ENCODE measurements at regions of chr11 and their contacts with region 1.

Region 1: DNA sequence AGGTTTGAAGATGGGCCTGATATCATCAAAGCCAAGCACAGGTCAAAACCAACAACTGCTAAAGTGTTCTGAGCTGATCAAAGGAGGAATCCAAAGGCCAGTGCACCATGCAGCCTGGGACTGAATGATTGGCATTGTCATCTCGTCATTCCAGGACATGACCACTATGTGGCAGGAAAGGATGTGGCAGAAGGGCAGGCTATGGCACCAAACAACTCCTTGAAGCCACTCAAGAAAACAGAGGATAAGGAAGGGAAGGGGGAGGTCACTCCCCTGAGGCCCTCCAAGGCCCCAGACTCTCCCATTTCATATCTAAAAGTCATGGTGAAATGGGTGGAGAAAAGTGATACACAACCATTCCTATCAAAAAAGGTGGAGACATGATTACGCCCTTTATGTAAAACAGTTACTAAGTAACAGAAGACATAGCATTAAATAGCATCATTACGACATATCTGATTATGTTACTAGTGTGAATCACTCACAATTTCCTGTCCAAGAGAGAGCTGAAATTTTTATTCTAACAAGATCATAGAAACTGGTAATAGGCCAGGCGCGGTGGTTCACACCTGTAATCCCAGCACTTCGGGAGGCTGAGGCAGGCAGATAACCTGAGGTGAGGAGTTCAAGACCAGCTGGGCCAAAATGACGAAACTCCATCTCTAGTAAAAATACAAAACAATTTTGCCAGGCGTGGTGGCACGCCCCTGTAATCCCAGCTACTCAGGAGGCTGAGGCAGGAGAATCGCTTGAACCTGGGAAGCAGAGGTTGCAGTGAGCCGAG is 49.3 kb downstream of the AHNAK start:
- DNase-seq: peak; percentile 76 to 98
- H3K4me3 ChIP-seq: no peak overlapping the region
- H3K27ac ChIP-seq: peak overlapping the region; percentile 73
- H3K4me1 ChIP-seq: peaks cover 28% of the 10 kb centered on the region
- H3K27me3 ChIP-seq: no peaks in the 10 kb centered on the region
- CTCF ChIP-seq: peak; percentile 74

Region 2: DNA sequence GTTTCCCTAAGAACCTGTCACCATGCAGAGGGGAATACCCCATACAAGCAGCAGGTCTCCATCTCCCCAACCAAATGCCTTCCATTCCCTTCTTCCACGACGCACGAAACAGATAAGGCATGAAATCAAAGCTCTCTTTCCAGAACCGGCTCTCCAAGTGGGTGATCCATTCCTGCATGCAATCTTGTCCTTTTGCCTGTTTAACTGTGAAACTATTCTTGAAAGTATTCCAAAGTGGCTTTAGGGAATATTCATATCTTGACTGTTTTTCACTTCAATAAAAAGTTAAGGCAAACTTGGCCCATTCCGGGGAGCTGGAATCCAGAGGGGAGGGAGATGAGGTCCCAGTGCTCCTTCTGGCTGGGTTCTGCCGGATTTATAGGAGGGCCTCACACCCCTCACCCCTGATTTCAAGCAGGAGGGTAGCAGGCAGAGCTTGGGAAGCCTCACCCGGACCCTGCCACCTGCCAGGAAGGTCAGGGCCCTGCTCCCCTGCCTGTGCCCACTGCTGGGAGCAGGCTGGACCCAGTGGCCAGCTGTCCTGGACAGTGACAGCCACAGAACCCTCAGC is 17.6 kb before region 1 on chr11:
- CTCF ChIA-PET with region 1: interaction called, 10 read pairs
- POLR2A ChIA-PET with region 1: interaction called, 47 read pairs
- intact Hi-C with region 1: loop called (anchors 1 kb)
- DNase-seq: no peak
- H3K4me3 ChIP-seq: peak overlapping the region; percentile 36; the same call in 1 of the 2 replicates
- H3K27ac ChIP-seq: peak overlapping the region; percentile 95
- H3K4me1 ChIP-seq: peaks cover 42% of the 10 kb centered on the region
- H3K27me3 ChIP-seq: no peaks in the 10 kb centered on the region
- CTCF ChIP-seq: no peak

Region 3: GRCh38 chr11:62566247-62566646 is 68.9 kb after region 1 on chr11:
- CTCF ChIA-PET with region 1: interaction called, 13 read pairs
- POLR2A ChIA-PET with region 1: no interaction called
- intact Hi-C with region 1: no loop called
- DNase-seq: no peak
- H3K4me3 ChIP-seq: no peak overlapping the region
- H3K27ac ChIP-seq: peak overlapping the region; percentile 36; the same call in 1 of the 2 replicates
- H3K4me1 ChIP-seq: peaks cover 48% of the 10 kb centered on the region
- H3K27me3 ChIP-seq: no peaks in the 10 kb centered on the region
- CTCF ChIP-seq: no peak

Measured in PC-9 (cell line).